ENCODE measurements at regions of chr1 and their contacts with region 1.

Region 1: DNA sequence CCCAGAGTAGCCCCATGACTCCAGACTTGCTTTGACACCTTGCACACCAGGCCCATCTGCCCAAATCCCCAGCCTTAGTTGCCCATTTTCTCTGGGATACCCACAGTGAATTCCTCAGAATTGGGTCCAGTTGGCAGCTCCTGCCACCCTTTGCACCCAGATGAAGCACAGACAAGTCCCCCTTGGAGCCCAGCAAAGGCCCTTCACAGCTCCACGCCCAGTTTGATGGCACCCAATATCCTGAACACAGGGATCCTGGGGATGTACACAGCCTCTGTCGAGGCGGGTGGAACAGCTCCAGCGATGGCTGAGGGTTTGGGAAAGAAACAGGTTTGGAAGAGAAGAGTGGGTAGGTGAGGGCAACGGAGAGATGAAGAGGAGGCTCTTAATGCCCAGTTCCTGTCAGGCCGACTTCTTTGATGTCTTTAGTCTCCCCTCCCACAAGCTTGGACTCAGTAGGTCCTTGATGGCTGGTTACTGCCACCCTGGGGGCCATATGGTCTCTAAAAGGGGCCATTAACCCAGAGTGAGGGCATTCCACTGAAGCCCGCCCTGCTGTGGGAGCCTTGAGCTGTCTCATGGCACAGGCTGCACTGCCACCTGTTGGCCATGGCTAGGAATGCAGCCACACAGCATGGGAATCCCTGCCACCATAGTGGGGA is 21.7 kb downstream of the TMEM53 start:
- DNase-seq: peak; percentile 20 to 85 (median 66)
- ATAC-seq: peak; percentile 84 to 93 (median 90)
- H3K4me3 ChIP-seq: no peak overlapping the region
- H3K4me3 Mint-ChIP-seq: no peak overlapping the region
- H3K27ac ChIP-seq: no peak overlapping the region
- H3K27ac Mint-ChIP-seq: peak overlapping the region; percentile 55 to 75
- H3K4me1 ChIP-seq: peaks cover 0 to 8% of the 10 kb centered on the region in 2 experiments
- H3K4me1 Mint-ChIP-seq: peaks cover 0 to 7% (median 0%) of the 10 kb centered on the region in 3 donors
- H3K27me3 ChIP-seq: no peaks in the 10 kb centered on the region
- H3K27me3 Mint-ChIP-seq: no peaks in the 10 kb centered on the region

Region 2: GRCh38 chr1:44377925-44378784 is 274.4 kb before region 1 on chr1:
- CTCF ChIA-PET with region 1: interaction called, 10 to 13 read pairs
- POLR2A ChIA-PET with region 1: no interaction called
- DNase-seq: peak in 30 of 35 experiments; percentile 4 to 69 (median 30)
- ATAC-seq: peak in 1 of 4 experiments; percentile 45
- H3K4me3 ChIP-seq: no peak overlapping the region
- H3K4me3 Mint-ChIP-seq: no peak overlapping the region
- H3K27ac ChIP-seq: no peak overlapping the region
- H3K27ac Mint-ChIP-seq: no peak overlapping the region
- H3K4me1 ChIP-seq: no peaks in the 10 kb centered on the region
- H3K4me1 Mint-ChIP-seq: no peaks in the 10 kb centered on the region
- H3K27me3 ChIP-seq: no peaks in the 10 kb centered on the region
- H3K27me3 Mint-ChIP-seq: no peaks in the 10 kb centered on the region

Region 3: GRCh38 chr1:44571712-44572571 is 80.6 kb before region 1 on chr1:
- CTCF ChIA-PET with region 1: interaction called, 30 to 35 read pairs
- POLR2A ChIA-PET with region 1: no interaction called
- DNase-seq: peak in 8 of 35 experiments; percentile 2 to 57 (median 8)
- ATAC-seq: peak in 3 of 4 experiments; percentile 38 to 58 (median 44)
- H3K4me3 ChIP-seq: no peak overlapping the region
- H3K4me3 Mint-ChIP-seq: no peak overlapping the region
- H3K27ac ChIP-seq: no peak overlapping the region
- H3K27ac Mint-ChIP-seq: no peak overlapping the region
- H3K4me1 ChIP-seq: no peaks in the 10 kb centered on the region
- H3K4me1 Mint-ChIP-seq: no peaks in the 10 kb centered on the region
- H3K27me3 ChIP-seq: peaks cover 0 to 14% of the 10 kb centered on the region in 2 experiments
- H3K27me3 Mint-ChIP-seq: peaks cover 16% of the 10 kb centered on the region in 2 donors

Region 4: DNA sequence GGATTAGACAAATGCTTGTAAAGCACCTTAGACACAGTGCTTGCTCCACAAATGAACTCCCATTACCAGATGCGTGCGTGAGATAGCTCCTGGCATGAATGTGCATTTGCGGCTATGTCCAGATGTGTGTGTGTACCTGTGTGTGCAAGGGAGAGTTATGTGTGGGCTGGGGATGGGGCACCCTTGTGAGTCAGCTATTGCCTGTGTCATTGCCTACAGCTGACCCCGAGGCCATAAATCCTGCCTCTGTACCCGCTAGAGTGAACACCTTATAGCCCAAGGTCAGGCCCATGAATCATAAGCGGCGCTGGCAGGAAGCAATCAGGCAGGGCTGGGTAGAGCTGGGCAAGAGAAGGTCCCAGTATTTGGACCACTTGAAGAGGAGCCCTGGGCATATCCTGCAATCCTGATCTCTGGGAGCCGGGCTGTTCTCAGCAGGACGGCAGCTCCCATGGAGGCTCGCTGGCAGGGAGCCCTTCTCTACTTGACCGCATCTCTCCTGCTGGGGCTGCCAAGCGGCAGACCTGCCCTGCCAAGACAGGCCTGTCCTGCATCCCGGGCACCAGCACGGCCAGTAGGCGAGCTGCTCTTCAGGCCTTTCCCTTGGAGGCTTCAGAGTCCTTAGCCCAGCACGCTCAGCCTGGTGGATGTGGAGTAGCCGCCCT is 64.6 kb before region 1 on chr1:
- CTCF ChIA-PET with region 1: no interaction called
- POLR2A ChIA-PET with region 1: no interaction called
- DNase-seq: no peak
- ATAC-seq: no peak
- H3K4me3 ChIP-seq: no peak overlapping the region
- H3K4me3 Mint-ChIP-seq: no peak overlapping the region
- H3K27ac ChIP-seq: no peak overlapping the region
- H3K27ac Mint-ChIP-seq: no peak overlapping the region
- H3K4me1 ChIP-seq: no peaks in the 10 kb centered on the region
- H3K4me1 Mint-ChIP-seq: no peaks in the 10 kb centered on the region
- H3K27me3 ChIP-seq: peaks cover 0 to 15% of the 10 kb centered on the region in 2 experiments
- H3K27me3 Mint-ChIP-seq: no peaks in the 10 kb centered on the region

Region 5: DNA sequence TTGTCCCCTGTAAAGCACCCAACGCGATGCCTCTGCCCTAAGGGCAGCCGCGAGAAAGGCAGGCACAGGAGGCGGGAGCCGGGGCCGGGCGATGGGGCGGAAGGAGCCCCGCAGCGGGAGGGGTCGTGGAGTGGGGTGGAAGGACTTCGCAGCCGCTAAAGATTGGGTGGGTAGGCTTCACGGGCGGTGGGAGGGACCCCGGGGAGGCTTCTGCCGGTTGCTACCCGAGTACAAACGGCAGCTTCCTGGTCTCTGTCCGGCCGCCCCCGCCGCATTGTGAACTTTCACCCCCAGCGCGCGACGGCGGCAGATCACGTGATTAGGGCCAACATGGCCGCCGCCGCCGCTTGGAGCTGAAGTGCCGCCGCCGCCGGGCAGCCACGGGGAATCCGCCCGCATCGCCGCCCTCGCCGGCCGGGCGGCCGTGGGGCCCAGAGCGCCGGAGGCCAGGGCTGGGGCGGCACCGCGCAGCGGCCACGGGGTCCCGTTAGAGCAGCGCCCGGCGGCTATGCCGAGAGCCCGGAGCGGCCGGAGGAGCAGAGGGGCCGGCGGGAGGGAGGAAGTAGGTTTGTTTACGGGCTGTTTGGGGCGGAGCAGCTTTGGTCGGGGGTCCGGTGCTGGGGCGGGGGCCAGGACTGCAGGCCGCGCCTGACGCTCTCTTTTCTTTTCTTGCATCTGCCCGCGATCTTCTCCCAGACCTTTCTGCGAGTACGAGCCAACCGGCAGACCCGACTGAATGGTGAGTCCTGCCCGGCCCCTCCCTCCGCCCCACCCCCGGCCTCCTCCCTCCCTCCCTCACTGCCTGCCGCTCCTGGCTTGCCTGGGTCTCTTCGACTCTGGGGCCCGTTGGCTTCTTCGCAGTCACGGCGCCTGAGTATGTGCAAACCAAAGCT is 20.7 kb before region 1 on chr1:
- CTCF ChIA-PET with region 1: interaction called, 7 to 10 read pairs
- POLR2A ChIA-PET with region 1: no interaction called
- DNase-seq: peak; percentile 78 to 91 (median 87)
- ATAC-seq: peak; percentile 80 to 83 (median 80)
- H3K4me3 ChIP-seq: peak overlapping the region; percentile 67 to 74
- H3K4me3 Mint-ChIP-seq: peak overlapping the region; percentile 89 to 90 (median 90)
- H3K27ac ChIP-seq: peak overlapping the region; percentile 90
- H3K27ac Mint-ChIP-seq: peak overlapping the region; percentile 97 to 99
- H3K4me1 ChIP-seq: peaks cover 6 to 29% of the 10 kb centered on the region in 2 experiments
- H3K4me1 Mint-ChIP-seq: peaks cover 42 to 54% (median 49%) of the 10 kb centered on the region in 3 donors
- H3K27me3 ChIP-seq: no peaks in the 10 kb centered on the region
- H3K27me3 Mint-ChIP-seq: no peaks in the 10 kb centered on the region

Region 6: DNA sequence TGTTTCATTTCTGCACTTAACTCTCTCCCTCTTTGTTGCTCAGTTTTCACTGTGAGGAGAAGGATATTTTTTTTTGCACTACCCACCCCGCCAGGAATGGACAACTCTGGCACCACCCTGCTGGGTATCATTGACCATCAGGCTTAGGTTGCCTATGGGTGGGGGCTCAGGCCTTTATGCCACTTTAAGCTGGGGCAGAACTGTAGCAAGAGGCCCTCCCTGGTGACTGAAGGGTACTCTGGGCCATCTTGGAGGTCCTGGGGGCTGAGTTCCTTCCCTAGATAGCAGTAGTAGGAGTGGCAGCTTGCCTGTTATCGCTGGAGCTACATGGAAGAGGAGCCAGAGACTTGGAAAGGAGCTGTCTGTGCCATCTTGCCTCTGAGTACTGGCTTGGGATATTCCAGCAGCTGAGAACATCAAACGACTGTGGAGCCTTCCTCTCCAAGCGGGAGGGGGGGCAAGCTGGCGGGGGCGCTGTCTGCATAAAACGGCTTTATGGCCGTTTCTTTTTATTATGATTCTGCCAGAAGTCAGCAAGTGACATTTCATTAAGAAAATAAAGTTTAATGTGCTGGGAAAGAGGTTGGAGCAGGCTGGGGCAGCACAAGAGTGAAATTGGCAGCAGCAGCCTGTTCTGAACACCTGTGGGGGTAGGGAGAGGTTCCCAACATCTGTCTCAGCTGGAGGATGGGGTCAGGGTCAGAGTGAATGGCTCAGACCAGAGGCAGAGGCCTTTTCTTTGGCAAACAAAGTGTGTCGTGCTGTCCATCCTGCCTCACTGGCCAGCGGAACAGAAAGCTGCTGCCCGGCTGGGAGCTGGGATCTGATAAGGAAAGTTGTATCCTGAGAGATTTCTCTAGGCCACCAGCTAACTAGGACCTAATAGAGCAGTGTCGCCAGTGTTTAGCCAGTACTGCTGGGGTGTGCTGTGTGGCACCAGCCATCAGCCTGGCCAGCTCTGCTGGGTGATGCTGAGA is 11.2 kb before region 1 on chr1:
- CTCF ChIA-PET with region 1: interaction called in 1 of 2 experiments, 10 read pairs
- POLR2A ChIA-PET with region 1: no interaction called
- DNase-seq: no peak
- ATAC-seq: no peak
- H3K4me3 ChIP-seq: no peak overlapping the region
- H3K4me3 Mint-ChIP-seq: no peak overlapping the region
- H3K27ac ChIP-seq: no peak overlapping the region
- H3K27ac Mint-ChIP-seq: peak overlapping the region in 1 of 2 donors; percentile 73
- H3K4me1 ChIP-seq: peaks cover 0 to 2% of the 10 kb centered on the region in 2 experiments
- H3K4me1 Mint-ChIP-seq: peaks cover 4 to 14% (median 6%) of the 10 kb centered on the region in 3 donors
- H3K27me3 ChIP-seq: no peaks in the 10 kb centered on the region
- H3K27me3 Mint-ChIP-seq: no peaks in the 10 kb centered on the region

Region 7: GRCh38 chr1:44674113-44675000 is 21.8 kb after region 1 on chr1 and contains the starts of genes ARMH1 and TMEM53:
- CTCF ChIA-PET with region 1: interaction called, 3 to 13 read pairs
- POLR2A ChIA-PET with region 1: no interaction called
- DNase-seq: peak; percentile 87 to 97 (median 93)
- ATAC-seq: peak; percentile 91 to 94 (median 94)
- H3K4me3 ChIP-seq: peak within 1 kb of the TSS; percentile 82 to 85
- H3K4me3 Mint-ChIP-seq: peak within 1 kb of the TSS; percentile 85 to 90 (median 85)
- H3K27ac ChIP-seq: peak within 1 kb of the TSS; percentile 73
- H3K27ac Mint-ChIP-seq: peak within 1 kb of the TSS; percentile 76 to 89
- H3K4me1 ChIP-seq: peaks cover 0 to 26% of the 10 kb centered on the region in 2 experiments
- H3K4me1 Mint-ChIP-seq: peaks cover 23 to 29% (median 26%) of the 10 kb centered on the region in 3 donors
- H3K27me3 ChIP-seq: no peaks in the 10 kb centered on the region
- H3K27me3 Mint-ChIP-seq: no peaks in the 10 kb centered on the region
- total RNA-seq, gene ARMH1: 49.5 to 102 (median 89.7) TPM
- total RNA-seq, gene TMEM53: 1.1 to 2.8 (median 2.2) TPM

Measured in T-cell (primary cell).